ENCODE measurements at regions of chr11 and their contacts with region 1.

Region 1: GRCh38 chr11:120096369-120097191 is 41.3 kb downstream of the TRIM29 start:
- DNase-seq: no peak
- H3K4me3 ChIP-seq: no peak overlapping the region
- H3K27ac ChIP-seq: no peak overlapping the region
- H3K4me1 ChIP-seq: no peaks in the 10 kb centered on the region
- H3K27me3 ChIP-seq: no peaks in the 10 kb centered on the region
- CTCF ChIP-seq: no peak
- EP300 ChIP-seq: no peak
- POLR2A ChIP-seq: no peak

Region 2: GRCh38 chr11:119651802-119652584 is 444.6 kb before region 1 on chr11:
- in situ Hi-C with region 1: loop called (anchors 10 to 25 kb)
- intact Hi-C with region 1: no loop called
- DNase-seq: no peak
- H3K4me3 ChIP-seq: no peak overlapping the region
- H3K27ac ChIP-seq: no peak overlapping the region
- H3K4me1 ChIP-seq: no peaks in the 10 kb centered on the region
- H3K27me3 ChIP-seq: no peaks in the 10 kb centered on the region
- CTCF ChIP-seq: no peak
- EP300 ChIP-seq: no peak
- POLR2A ChIP-seq: no peak

Measured in transverse colon (tissue), 4 donors.